GM10248 (cell line): ENCODE measurements at regions of chr11 and their contacts with region 1.

Region 1: GRCh38 chr11:64204464-64204989 is 2.0 kb upstream of the FERMT3 start:
- DNase-seq: peak; percentile 83
- CTCF ChIP-seq: peak; percentile 84

Region 2: DNA sequence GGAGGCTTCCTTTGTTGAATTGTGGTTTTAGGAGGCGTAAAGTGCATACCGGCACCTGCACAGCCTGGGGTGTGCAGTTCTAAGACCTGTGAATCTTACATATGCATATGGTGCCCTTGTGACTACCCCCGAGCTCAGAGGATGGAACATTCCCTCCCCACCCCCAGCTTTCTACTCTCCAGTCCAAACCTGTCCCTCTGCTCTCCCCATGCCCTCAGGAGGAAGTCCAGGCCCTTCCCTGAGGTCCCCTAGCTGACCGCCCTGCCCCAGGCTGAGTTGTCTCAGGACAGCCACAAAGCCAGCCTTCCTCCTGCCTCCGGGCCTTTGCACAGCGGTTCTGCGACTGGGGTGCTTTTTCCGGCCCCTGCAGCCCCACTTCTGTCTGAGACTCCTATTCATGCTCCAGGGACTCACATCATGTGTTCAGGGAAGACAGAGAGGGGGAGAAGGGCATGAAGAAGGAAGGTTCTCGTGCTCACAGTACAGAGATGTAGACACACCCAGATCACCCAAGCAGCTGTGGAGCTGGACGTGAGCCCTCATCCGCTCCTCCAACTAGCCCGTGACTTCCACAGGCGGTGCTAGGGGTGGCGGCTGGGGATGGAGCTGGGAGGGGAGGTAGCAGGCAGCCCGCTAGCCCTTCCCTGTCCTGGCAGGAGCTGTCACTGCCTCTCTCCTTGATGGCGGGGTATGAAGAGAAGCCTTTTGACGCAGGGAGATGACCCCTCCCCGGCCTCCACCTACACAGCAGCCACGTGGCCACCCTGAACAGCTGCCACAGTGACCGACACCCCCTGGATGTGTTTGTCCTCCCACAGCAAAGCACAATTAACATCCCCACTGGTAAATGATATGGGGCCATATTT is 118.0 kb before region 1 on chr11:
- CTCF ChIA-PET with region 1: no interaction called
- POLR2A ChIA-PET with region 1: no interaction called
- DNase-seq: no peak
- CTCF ChIP-seq: no peak

Region 3: DNA sequence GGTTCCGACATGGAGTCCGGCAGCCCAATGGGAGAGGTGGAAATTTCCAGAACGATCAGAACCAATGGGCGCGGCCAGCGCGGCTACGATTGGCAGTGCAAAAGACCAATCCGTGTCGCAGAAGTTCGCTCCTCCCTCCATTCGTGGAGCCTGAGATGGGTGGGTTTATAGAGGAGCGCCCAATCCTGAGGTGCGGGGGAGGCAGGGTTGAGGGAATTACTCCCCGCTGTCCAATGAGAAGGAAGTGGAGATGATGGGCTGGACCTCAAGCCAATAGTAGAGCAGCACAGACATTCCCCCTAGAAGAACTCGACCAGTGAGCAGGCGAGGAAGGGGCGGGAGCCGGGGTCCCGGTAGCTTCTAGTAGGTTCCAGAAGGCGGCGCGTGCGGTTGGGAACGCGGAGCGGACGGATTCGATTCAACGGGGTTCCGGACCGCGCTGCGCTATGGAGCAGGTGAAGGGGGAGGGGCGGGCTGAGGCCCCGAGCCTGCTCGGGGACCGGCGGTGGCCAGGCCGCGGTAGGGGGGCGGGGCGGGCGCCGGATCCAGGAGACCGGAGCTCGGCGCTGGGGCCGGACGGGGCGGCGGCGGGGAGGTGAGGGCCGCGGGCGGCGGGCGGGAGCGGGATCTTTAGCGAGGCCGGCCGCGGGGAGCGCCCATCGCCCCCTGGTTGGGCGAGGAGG is 18.6 kb before region 1 on chr11 and contains the start of gene STIP1:
- CTCF ChIA-PET with region 1: interaction called, 61 read pairs
- POLR2A ChIA-PET with region 1: interaction called, 36 read pairs
- DNase-seq: peak; percentile 97
- CTCF ChIP-seq: peak; percentile 22

Region 4: GRCh38 chr11:64225612-64226506 is 21.3 kb after region 1 on chr11 and contains the starts of genes NUDT22 and TRPT1:
- CTCF ChIA-PET with region 1: interaction called, 368 read pairs
- POLR2A ChIA-PET with region 1: interaction called, 21 read pairs
- DNase-seq: peak; percentile 93
- CTCF ChIP-seq: peak; percentile 22

Region 5: GRCh38 chr11:64246871-64247728 is 42.6 kb after region 1 on chr11 and contains the start of gene PPP1R14B:
- CTCF ChIA-PET with region 1: interaction called, 368 read pairs
- POLR2A ChIA-PET with region 1: no interaction called
- DNase-seq: peak; percentile 85
- CTCF ChIP-seq: no peak

Region 6: DNA sequence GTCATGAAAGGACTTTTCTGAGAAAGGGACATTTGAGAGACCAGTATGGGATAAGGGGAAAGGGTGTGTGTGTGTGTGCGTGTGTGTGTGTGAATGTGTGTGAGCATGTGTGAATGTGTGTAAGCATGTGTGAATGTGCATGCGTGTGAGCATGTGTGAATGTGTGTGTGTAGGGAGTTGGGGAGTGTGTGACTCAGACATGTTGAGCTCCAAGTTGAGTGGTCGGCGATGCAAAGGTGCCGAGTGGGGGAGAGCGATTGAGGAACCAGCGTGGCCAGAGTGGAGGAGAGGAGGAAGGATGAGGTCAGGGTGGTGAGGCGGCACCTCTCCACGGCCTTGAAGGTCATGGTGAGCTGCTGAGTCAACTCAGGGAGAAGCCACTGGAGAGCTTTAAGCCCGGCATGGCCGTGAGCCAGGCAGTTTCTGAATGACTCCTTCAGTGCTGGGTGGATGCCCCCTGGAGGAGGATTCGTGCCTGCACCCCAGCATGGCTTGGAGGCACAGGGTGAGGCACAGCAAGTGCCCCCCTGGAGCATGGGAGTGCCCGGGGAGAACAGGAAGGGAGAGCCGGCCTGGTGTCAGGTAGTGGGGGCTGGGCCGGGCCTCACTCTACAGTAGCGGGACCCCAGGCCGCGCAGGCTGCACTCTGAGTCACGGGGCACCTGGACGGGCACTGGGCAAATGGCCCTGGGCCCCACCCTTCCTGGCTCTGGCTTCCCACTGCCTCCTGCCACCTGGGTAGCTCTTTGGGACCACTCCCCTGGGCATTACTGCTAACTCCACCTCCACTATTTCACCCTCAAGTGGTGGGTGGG is 127.2 kb after region 1 on chr11:
- CTCF ChIA-PET with region 1: interaction called, 14 read pairs
- POLR2A ChIA-PET with region 1: interaction called, 6 read pairs
- DNase-seq: peak; percentile 79
- CTCF ChIP-seq: peak; percentile 56